AG04450 (cell line): ENCODE measurements at regions of chr4 and their contacts with region 1.

Region 1: DNA sequence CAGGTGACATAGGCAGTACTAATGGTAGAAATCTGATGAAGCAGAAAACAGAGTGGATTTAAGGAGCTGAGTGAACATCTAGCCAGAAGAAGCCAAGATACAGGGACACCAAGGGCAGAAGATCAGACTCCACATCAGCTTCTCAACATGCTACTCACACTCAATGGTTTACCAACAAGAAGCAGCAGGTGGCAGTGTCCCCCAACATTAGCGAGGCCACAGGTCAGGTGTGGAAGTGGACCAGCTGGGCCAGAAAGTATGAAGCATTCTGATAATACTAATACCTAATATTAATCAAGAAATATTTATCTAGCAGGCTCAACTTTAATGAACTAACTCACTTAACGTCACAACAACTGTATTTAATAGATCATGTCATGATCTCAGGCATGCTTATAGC is 73.4 kb upstream of the TTC29 start:
- DNase-seq: peak; percentile 13
- H3K4me3 ChIP-seq: no peak overlapping the region
- H3K27ac ChIP-seq: no peak overlapping the region
- H3K27me3 ChIP-seq: no peaks in the 10 kb centered on the region
- CTCF ChIP-seq: peak; percentile 69

Region 2: DNA sequence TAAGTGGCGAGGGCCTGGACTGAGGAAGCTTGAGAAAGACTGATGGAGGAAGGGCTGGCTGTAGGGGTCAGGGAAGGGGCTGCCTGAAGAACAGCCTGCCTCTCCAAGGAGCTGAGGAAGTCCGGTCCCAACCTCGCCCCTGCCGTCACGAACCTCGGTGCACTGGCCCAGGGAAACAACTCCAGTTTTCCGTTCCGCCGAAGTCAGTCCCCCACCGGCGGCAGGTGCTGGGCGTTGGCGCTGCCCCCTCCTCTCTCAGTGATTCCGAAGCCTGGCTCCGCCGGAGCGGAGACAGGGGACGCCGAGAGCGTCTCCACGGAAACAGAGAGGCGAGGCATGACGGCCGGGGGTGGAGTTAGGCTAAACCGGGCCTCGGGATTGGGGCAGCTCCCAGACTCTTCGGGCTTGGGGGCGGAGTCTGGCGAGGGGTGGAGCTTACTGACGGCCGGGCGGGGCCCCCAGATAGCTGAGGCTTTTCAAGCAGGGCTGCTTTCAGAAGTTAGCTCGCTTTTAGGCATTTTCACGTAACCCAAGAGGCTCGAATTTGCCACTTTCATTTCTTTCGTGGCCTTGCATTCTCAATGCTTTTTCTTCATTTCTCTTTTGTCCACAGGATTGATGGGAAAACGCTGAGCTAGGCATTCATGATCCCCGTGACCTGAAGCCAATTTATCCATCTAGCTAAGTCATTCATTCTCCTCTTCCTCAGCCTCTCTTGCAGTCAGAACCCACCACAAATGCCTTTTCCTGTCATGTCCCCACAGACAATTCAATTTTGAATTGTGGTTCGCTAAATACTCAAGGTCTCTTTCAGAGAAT is 73.3 kb before region 1 on chr4 and contains the start of gene TTC29:
- CTCF ChIA-PET with region 1: no interaction called
- POLR2A ChIA-PET with region 1: no interaction called
- DNase-seq: peak; percentile 36
- H3K4me3 ChIP-seq: peak within 1 kb of the TSS; percentile 63
- H3K27ac ChIP-seq: no peak within 1 kb of the TSS
- H3K27me3 ChIP-seq: peaks cover 5% of the 10 kb centered on the region
- CTCF ChIP-seq: no peak
- polyA plus RNA-seq, gene TTC29: not detected in 2 replicates

Region 3: DNA sequence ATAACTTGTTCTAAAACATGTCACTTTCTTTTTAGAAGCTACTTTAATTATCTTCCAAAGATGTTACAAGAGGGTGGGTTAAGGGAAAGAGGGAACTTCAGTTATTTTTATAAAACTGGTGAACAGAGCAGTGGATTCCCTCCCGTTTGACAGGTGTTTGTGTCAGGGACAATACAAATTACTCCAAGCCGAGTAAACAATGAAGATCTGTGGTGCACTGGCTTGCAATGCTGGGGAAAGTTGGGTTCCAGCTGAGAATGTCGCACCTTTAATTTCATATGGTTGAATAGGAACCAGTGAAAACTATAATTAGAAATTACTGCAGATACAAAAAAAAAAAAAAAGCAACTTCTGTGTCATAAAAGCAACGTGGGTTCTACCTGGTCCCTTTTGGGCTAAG is 25.2 kb after region 1 on chr4:
- CTCF ChIA-PET with region 1: interaction called, 10 read pairs
- POLR2A ChIA-PET with region 1: no interaction called
- DNase-seq: no peak
- H3K4me3 ChIP-seq: no peak overlapping the region
- H3K27ac ChIP-seq: no peak overlapping the region
- H3K27me3 ChIP-seq: no peaks in the 10 kb centered on the region
- CTCF ChIP-seq: no peak

Region 4: DNA sequence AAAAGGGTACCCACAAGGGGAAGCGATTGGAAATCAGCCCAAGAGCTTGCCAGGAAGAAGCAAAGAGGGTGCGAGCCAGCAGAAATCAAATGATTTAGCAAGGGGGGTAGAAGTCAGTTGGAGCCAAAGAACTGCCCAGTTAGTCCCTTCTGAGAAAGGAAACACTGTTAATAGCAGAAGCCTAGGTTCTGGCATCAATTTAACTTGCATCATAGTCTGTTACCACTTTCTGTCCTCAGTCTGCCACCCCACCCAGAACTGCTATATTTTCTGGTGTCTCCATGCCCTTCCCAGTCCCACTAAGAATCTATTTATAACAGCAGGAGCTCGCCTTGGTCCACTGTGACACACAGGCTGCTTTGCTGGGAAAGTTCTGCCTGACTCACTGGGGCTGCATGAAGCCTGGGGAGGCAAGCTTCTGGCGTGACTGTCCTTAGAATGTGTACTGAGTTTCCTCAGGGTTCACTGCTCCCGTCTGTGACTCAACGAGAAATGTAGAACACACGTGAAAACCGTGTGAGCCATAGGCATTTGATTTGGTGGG is 84.4 kb after region 1 on chr4:
- CTCF ChIA-PET with region 1: interaction called, 37 read pairs
- POLR2A ChIA-PET with region 1: no interaction called
- DNase-seq: peak; percentile 81
- H3K4me3 ChIP-seq: no peak overlapping the region; the same call in 1 of the 2 replicates
- H3K27ac ChIP-seq: peak overlapping the region; percentile 85
- H3K27me3 ChIP-seq: peaks cover 2% of the 10 kb centered on the region
- CTCF ChIP-seq: no peak

Region 5: GRCh38 chr4:147453561-147454141 is 434.6 kb after region 1 on chr4:
- CTCF ChIA-PET with region 1: no interaction called
- POLR2A ChIA-PET with region 1: no interaction called
- DNase-seq: peak; percentile 24
- H3K4me3 ChIP-seq: no peak overlapping the region
- H3K27ac ChIP-seq: no peak overlapping the region
- H3K27me3 ChIP-seq: no peaks in the 10 kb centered on the region
- CTCF ChIP-seq: no peak

Region 6: DNA sequence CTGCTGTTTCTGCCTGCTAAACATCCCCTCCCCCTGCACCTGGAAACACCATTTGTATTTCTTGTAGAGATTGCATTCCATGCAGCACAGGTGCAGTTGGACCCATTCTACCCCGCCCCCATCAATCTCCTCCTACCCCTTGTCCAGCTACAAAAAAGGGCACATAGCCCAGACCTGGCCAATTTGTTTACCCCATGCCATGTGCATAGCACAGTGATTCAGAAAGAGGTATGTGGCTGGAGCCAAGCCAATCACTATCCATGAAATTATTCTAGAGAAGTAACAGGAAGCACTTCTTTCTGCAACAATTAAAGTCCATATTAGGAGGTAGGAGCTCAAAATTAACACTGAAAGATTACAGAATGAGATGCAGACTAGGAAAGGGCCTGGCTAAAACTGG is 577.9 kb after region 1 on chr4:
- CTCF ChIA-PET with region 1: interaction called, 11 read pairs
- POLR2A ChIA-PET with region 1: no interaction called
- DNase-seq: peak; percentile 87
- H3K4me3 ChIP-seq: no peak overlapping the region
- H3K27ac ChIP-seq: peak overlapping the region; percentile 92
- H3K27me3 ChIP-seq: no peaks in the 10 kb centered on the region
- CTCF ChIP-seq: no peak

Region 7: DNA sequence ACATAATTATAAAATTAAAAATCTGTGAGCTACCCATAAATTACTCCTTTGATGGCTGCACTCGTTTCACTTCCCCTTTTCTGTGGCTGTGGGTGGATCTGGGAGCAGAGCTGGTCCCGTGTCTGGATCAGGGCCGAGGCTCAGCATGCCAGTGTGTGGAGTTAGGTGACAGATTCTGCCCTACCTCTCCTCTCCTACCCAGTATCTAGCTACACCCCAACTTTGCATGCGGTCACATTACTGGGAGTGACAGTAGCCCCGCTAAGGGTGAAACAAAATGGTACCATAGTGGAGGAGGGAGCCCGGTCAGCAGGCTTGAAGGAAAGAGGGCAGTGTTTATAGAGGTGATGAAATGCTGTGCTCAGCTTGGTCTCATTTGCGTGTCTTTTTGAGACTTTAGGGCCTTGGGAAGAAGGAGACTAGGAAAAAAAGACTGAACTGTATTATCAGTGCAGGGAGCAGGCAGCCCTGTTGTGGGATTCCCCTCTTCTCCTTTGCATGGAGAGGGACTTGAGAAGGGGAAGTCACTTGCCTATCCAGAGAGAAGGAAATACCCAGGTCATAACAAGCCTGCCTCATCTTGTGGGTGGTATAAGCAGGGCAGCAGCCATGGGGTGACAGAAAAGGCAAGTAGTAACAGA is 761.2 kb after region 1 on chr4:
- CTCF ChIA-PET with region 1: no interaction called
- POLR2A ChIA-PET with region 1: no interaction called
- DNase-seq: no peak
- H3K4me3 ChIP-seq: no peak overlapping the region
- H3K27ac ChIP-seq: peak overlapping the region; percentile 21
- H3K27me3 ChIP-seq: no peaks in the 10 kb centered on the region
- CTCF ChIP-seq: no peak